Activated T-helper 2 cell treated with anti-CD3 and anti-CD28 coated beads, Interferon-gamma antibody, Interleukin-2, Interleukin-4, amounts not matched to agents 10 μg/mL and 5 μg/mL and 100 μg/mL, durations not matched to agents 14 hours and 24 hours and 36 hours (primary cell): ENCODE measurements at regions of chr7 and their contacts with region 1.

Region 1: DNA sequence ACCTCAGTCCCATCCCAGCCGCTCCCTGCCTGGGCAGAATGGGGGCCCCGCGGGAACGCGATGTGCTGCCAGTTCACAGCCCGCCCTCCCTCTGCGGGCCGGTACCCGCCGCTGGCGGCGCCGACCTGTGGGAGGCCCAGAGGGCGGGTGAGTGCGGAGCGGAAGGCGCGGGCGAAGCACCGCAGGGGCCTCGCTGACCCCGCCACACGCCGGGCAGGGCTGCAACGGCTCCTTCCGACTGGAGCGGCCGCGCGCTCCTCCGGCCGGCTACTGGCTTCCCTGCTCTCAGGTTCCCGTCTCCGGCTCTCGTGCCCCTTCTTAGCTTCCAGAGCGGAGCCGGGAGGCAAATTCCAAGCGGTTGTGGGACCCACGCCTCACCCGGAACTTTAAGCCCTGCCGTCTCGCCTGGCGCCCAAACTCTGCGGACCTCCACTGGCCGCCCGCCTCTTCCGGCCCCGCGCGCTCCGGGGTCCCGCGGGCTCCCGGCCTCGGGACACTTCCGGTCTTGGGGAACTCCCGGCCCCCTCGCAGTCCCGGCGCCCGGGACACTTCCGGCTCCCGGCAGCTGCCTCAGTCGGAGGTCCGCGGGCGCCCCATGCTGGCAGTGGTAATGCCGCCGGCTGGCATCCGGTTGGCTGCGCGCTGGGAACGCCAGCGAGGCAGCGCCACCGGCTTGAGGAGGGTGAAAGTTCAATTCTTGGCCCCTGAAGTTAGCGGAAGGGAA is at the start of gene CYREN:
- DNase-seq: peak; percentile 82
- H3K4me3 Mint-ChIP-seq: peak within 1 kb of the TSS; percentile 95
- H3K27ac Mint-ChIP-seq: peak within 1 kb of the TSS; percentile 95
- H3K4me1 Mint-ChIP-seq: peaks cover 33% of the 10 kb centered on the region
- H3K27me3 Mint-ChIP-seq: no peaks in the 10 kb centered on the region
- total RNA-seq, gene CYREN: 50.1 and 52.9 TPM in 2 replicates

Region 2: DNA sequence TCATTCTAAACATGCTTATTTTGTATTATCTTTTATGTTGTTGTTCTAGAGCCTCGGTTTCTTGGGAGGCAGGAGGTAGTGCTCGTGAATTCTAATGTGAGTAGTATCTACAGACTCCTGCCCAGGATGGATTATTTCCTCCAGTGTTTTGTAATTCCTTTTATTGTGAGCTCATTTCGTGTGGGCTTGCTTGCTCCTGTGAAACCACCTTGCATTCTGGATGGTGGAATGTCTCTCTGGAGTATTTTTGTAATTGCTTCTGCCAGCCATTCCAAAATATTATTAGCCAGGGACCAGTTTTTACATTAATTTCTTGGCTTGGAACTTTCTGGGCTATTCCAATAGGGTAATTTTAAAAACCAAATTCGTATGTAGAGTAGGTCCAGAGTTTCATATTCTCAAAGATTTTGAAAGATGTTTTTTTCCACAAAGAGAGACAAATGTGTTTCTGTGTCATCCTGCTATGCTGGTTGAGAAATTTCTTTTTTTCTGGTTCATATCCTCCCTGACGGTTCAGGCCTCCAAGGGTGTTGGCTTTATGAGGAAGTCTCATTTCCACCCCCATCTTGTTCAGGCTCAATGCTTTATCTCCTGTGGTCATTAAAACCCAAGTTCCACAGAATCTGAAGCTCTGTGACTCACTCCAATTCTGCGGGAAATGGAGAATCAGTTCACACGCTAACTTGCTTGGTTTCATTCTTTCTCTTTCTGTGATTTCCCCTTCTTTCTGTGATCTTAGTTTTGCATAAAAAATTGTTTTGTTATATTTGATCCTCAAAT is 432.7 kb before region 1 on chr7:
- intact Hi-C with region 1: loop called (anchors 10 kb)
- DNase-seq: peak; percentile 28
- H3K4me3 Mint-ChIP-seq: no peak overlapping the region
- H3K27ac Mint-ChIP-seq: peak overlapping the region; percentile 90
- H3K4me1 Mint-ChIP-seq: peaks cover 55% of the 10 kb centered on the region
- H3K27me3 Mint-ChIP-seq: no peaks in the 10 kb centered on the region

Region 3: GRCh38 chr7:135121868-135122267 is 48.6 kb before region 1 on chr7:
- intact Hi-C with region 1: no loop called
- DNase-seq: no peak
- H3K4me3 Mint-ChIP-seq: no peak overlapping the region
- H3K27ac Mint-ChIP-seq: no peak overlapping the region
- H3K4me1 Mint-ChIP-seq: no peaks in the 10 kb centered on the region
- H3K27me3 Mint-ChIP-seq: peaks cover 11% of the 10 kb centered on the region

Region 4: GRCh38 chr7:135147899-135148721 is 22.3 kb before region 1 on chr7 and contains the start of gene TMEM140:
- intact Hi-C with region 1: loop called (anchors 1 kb)
- DNase-seq: peak; percentile 63
- H3K4me3 Mint-ChIP-seq: peak within 1 kb of the TSS; percentile 86
- H3K27ac Mint-ChIP-seq: peak within 1 kb of the TSS; percentile 97
- H3K4me1 Mint-ChIP-seq: peaks cover 65% of the 10 kb centered on the region
- H3K27me3 Mint-ChIP-seq: no peaks in the 10 kb centered on the region
- total RNA-seq, gene TMEM140: 3.0 and 4.8 TPM in 2 replicates

Region 5: GRCh38 chr7:135558337-135558767 is 387.9 kb after region 1 on chr7:
- intact Hi-C with region 1: loop called (anchors 5 kb)
- DNase-seq: peak; percentile 64
- H3K4me3 Mint-ChIP-seq: no peak overlapping the region
- H3K27ac Mint-ChIP-seq: no peak overlapping the region
- H3K4me1 Mint-ChIP-seq: peaks cover 19% of the 10 kb centered on the region
- H3K27me3 Mint-ChIP-seq: peaks cover 1% of the 10 kb centered on the region